ENCODE measurements at regions of chr18 and their contacts with region 1.

Region 1: GRCh38 chr18:11114664-11115063 is 34.7 kb downstream of the PIEZO2 start:
- DNase-seq: no peak
- ATAC-seq: no peak
- H3K4me3 ChIP-seq: no peak overlapping the region
- H3K27ac ChIP-seq: no peak overlapping the region
- H3K4me1 ChIP-seq: no peaks in the 10 kb centered on the region
- H3K27me3 ChIP-seq: no peaks in the 10 kb centered on the region
- CTCF ChIP-seq: no peak

Region 2: GRCh38 chr18:11096411-11096810 is 18.3 kb before region 1 on chr18:
- intact Hi-C with region 1: loop called in 1 of 10 experiments (anchors 1 kb)
- DNase-seq: no peak
- ATAC-seq: no peak
- H3K4me3 ChIP-seq: no peak overlapping the region
- H3K27ac ChIP-seq: no peak overlapping the region
- H3K4me1 ChIP-seq: peaks cover 0 to 16% (median 4%) of the 10 kb centered on the region in 9 donors
- H3K27me3 ChIP-seq: no peaks in the 10 kb centered on the region
- CTCF ChIP-seq: no peak

Region 3: GRCh38 chr18:11259469-11260150 is 144.9 kb after region 1 on chr18:
- intact Hi-C with region 1: no loop called
- DNase-seq: peak; percentile 34 to 49
- ATAC-seq: peak; percentile 47 to 95 (median 82)
- H3K4me3 ChIP-seq: no peak overlapping the region
- H3K27ac ChIP-seq: peak overlapping the region in 1 of 10 donors; percentile 34
- H3K4me1 ChIP-seq: peaks cover 0 to 8% (median 0%) of the 10 kb centered on the region in 9 donors
- H3K27me3 ChIP-seq: no peaks in the 10 kb centered on the region
- CTCF ChIP-seq: no peak